Activated CD4-positive, alpha-beta T cell treated with anti-CD3 and anti-CD28 coated beads, Interleukin-2, amount 10 ng/mL, durations not matched to agents 7 days and 5 days (primary cell): ENCODE measurements at regions of chr19 and their contacts with region 1.

Region 1: GRCh38 chr19:4851551-4852290 is 15.7 kb downstream of the PLIN3 start:
- DNase-seq: peak; percentile 77
- H3K4me3 Mint-ChIP-seq: no peak overlapping the region
- H3K27ac Mint-ChIP-seq: no peak overlapping the region
- H3K4me1 Mint-ChIP-seq: peaks cover 3% of the 10 kb centered on the region
- H3K27me3 Mint-ChIP-seq: no peaks in the 10 kb centered on the region

Region 2: GRCh38 chr19:4815426-4816201 is 36.1 kb before region 1 on chr19:
- CTCF ChIA-PET with region 1: interaction called, 20 read pairs
- POLR2A ChIA-PET with region 1: no interaction called
- DNase-seq: peak; percentile 84
- H3K4me3 Mint-ChIP-seq: peak overlapping the region; percentile 49
- H3K27ac Mint-ChIP-seq: peak overlapping the region; percentile 76
- H3K4me1 Mint-ChIP-seq: peaks cover 29% of the 10 kb centered on the region
- H3K27me3 Mint-ChIP-seq: no peaks in the 10 kb centered on the region

Region 3: DNA sequence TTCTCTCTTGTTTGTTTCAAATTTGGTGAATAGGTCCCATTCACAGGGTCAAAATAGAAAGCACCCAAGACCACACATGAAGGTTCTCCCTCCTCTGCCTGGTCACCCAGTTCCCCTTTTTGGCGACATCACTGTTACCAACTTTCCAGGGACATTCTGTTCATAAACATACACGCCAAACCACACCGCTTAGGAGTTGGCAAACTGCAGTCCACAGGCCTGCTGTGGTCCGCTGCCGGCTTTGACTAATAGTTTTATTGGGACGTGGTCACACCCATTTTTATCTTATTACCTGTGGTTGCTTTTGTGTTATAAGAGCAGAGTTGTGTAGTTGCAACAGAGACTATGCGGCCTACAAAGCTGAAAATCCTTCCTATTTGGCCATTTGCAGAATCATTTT is 81.8 kb after region 1 on chr19:
- CTCF ChIA-PET with region 1: no interaction called
- POLR2A ChIA-PET with region 1: no interaction called
- DNase-seq: no peak
- H3K4me3 Mint-ChIP-seq: no peak overlapping the region
- H3K27ac Mint-ChIP-seq: no peak overlapping the region
- H3K4me1 Mint-ChIP-seq: no peaks in the 10 kb centered on the region
- H3K27me3 Mint-ChIP-seq: no peaks in the 10 kb centered on the region